ENCODE measurements at regions of chr22 and their contacts with region 1.

Region 1: GRCh38 chr22:42369245-42370041 is 62.8 kb downstream of the NFAM1 start:
- DNase-seq: peak; percentile 91
- ATAC-seq: peak; percentile 99
- H3K4me3 Mint-ChIP-seq: peak overlapping the region; percentile 82
- H3K27ac Mint-ChIP-seq: peak overlapping the region; percentile 53
- H3K4me1 Mint-ChIP-seq: peaks cover 17% of the 10 kb centered on the region
- H3K27me3 Mint-ChIP-seq: peaks cover 27% of the 10 kb centered on the region

Region 2: GRCh38 chr22:41998361-41999275 is 370.8 kb before region 1 on chr22 and contains the start of gene WBP2NL:
- CTCF ChIA-PET with region 1: no interaction called
- POLR2A ChIA-PET with region 1: no interaction called
- intact Hi-C with region 1: loop called in 1 of 2 experiments (anchors 2 kb)
- DNase-seq: peak; percentile 92
- ATAC-seq: peak; percentile 97
- H3K4me3 Mint-ChIP-seq: peak within 1 kb of the TSS; percentile 77
- H3K27ac Mint-ChIP-seq: peak within 1 kb of the TSS; percentile 97
- H3K4me1 Mint-ChIP-seq: peaks cover 20% of the 10 kb centered on the region
- H3K27me3 Mint-ChIP-seq: no peaks in the 10 kb centered on the region
- total RNA-seq, gene WBP2NL: 0.30 to 0.54 TPM

Region 3: DNA sequence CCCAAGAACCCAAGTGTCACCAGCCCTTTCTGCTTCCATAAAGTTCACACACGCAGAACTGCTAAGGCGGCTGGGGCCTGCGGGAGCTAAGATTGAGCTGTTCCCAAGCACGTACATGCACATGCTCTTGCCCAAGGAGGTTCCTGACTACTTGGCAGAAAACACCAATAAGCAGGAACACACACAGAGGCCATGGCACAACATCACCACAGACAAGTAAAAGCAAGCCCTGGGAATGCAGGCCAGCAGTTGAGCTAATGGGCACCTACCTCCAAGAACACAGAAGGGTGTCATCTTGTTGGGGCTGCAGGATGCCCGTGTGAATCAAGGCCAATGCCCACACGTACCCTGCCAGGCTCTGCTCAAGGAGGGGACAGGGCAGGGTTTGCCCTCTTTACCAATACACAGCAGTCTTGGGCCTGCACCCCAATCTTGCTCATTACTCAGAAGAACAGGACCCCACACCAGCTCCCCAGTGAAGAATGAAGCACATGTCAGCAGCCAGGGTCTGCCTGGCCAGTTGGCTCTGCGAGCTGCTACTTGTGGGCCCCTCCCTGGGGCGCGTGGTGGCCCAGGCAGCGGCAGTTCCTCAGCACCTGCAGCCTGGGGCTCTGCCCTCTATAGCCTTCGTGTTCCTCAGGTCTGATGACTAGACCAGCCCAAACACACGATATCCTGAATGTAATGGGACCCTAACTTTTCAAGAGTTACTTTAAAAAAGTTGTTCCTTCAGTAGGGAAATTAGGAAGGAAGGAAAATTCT is 206.5 kb before region 1 on chr22:
- CTCF ChIA-PET with region 1: no interaction called
- POLR2A ChIA-PET with region 1: no interaction called
- intact Hi-C with region 1: no loop called
- DNase-seq: no peak
- ATAC-seq: no peak
- H3K4me3 Mint-ChIP-seq: no peak overlapping the region
- H3K27ac Mint-ChIP-seq: no peak overlapping the region
- H3K4me1 Mint-ChIP-seq: no peaks in the 10 kb centered on the region
- H3K27me3 Mint-ChIP-seq: no peaks in the 10 kb centered on the region

Region 4: DNA sequence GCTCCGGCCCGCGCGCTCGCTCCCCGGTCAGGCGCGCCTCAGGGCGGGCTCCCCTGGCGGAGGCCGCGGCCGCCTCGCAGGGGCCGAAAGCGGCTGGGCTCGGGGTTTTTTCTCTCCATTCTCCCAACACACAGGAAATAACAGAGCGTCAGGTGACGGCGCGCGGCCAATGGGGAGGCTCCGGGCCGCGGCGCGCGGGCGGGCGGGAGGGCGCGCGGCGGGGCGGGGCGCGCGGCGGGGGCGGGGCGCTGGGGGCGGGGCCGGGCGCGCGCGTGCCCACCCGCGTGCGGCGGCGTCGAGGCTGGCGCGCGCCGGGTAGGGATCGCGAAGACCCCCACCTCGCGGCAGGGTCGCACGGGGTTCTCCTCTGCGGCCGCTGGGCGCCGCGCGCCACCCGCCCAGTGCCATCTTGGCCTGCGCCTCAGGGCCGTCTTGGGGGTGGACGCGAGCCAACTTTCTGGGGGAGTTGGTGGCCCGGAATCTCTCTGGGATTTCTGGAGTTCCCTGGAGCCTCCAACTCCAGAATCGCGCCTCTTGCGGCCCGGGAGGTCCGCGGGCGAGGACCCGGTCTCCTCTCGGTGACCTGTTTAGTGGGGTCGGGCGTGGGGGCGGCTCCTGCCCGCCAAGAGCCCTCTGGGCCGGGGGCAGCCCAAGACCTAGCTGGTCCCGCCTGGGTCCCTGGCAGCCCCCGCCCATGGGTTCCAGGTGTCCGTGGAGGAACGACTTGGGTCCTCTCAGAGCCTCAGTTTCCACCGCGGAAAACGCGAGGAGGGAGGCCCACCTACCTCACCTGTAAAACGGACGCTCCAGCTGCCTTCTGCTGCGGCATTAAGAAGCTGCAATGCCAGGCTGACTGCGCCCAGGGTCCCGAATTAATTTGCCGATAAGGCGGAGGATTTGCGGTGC is 98.7 kb before region 1 on chr22 and contains the start of gene TCF20:
- CTCF ChIA-PET with region 1: interaction called, 3 read pairs
- POLR2A ChIA-PET with region 1: no interaction called
- intact Hi-C with region 1: loop called in 1 of 2 experiments (anchors 1 kb)
- DNase-seq: peak; percentile 88
- ATAC-seq: peak; percentile 85
- H3K4me3 Mint-ChIP-seq: peak within 1 kb of the TSS; percentile 96
- H3K27ac Mint-ChIP-seq: peak within 1 kb of the TSS; percentile 82
- H3K4me1 Mint-ChIP-seq: peaks cover 30% of the 10 kb centered on the region
- H3K27me3 Mint-ChIP-seq: no peaks in the 10 kb centered on the region
- total RNA-seq, gene TCF20: 64.1 to 68.3 TPM

Region 5: GRCh38 chr22:42444077-42444904 is 74.8 kb after region 1 on chr22:
- CTCF ChIA-PET with region 1: interaction called, 4 read pairs
- POLR2A ChIA-PET with region 1: no interaction called
- intact Hi-C with region 1: loop called in 1 of 2 experiments (anchors 1 kb)
- DNase-seq: peak; percentile 88
- ATAC-seq: peak; percentile 69
- H3K4me3 Mint-ChIP-seq: peak overlapping the region; percentile 68
- H3K27ac Mint-ChIP-seq: peak overlapping the region; percentile 78
- H3K4me1 Mint-ChIP-seq: peaks cover 32% of the 10 kb centered on the region
- H3K27me3 Mint-ChIP-seq: no peaks in the 10 kb centered on the region

Region 6: DNA sequence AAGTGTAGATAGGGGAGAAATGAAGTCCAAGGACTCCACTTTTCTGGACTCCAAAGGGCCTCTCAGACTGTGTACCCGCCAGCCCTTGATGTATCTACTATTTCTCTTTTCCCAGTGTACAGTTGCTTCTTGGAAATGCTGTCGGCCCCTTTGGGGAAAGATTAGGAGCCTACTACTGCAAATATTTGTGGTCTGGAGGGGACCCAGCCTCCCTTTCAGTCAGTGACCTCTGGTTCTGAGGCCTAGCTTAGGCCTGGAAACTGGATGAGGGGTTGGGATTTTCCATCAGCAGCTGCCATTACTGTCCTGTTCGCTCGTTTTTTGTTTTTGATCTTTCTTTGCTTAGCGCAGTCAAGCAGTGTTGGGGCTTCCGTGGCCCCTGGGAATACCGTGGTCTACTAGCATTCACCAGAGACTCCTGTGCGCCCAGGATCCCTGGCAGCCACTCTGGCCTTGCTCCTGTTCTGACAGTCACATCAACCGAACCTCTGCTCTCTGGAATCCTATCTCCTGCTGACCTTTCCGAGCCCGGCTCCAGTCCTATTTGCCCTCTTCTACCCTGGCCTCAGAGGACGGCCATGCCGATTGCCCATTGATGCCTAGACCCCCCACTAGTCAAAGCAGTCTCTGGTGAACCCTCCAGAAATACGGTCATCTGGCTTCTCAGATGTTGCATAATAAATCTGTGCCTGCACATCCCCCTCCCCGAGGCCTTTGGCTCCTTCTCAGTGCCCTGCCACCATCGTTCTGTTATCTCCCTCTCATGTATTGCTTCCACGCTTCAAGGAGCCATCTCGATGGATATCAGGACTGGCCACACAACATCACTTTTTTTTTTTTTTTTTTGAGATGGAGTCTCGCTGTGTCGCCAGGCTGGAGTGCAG is 151.5 kb after region 1 on chr22:
- CTCF ChIA-PET with region 1: no interaction called
- POLR2A ChIA-PET with region 1: no interaction called
- intact Hi-C with region 1: loop called in 1 of 2 experiments (anchors 1 kb)
- DNase-seq: no peak
- ATAC-seq: no peak
- H3K4me3 Mint-ChIP-seq: no peak overlapping the region
- H3K27ac Mint-ChIP-seq: no peak overlapping the region
- H3K4me1 Mint-ChIP-seq: peaks cover 9% of the 10 kb centered on the region
- H3K27me3 Mint-ChIP-seq: no peaks in the 10 kb centered on the region